ENCODE measurements at regions of chr2 and their contacts with region 1.

Region 1: GRCh38 chr2:56687169-56687568 is 503.4 kb downstream of the CCDC85A start:
- DNase-seq: no peak
- ATAC-seq: no peak
- H3K4me3 ChIP-seq: no peak overlapping the region
- H3K4me3 Mint-ChIP-seq: no peak overlapping the region
- H3K27ac ChIP-seq: no peak overlapping the region
- H3K27ac Mint-ChIP-seq: no peak overlapping the region
- H3K4me1 ChIP-seq: no peaks in the 10 kb centered on the region
- H3K4me1 Mint-ChIP-seq: no peaks in the 10 kb centered on the region
- H3K27me3 ChIP-seq: no peaks in the 10 kb centered on the region
- H3K27me3 Mint-ChIP-seq: no peaks in the 10 kb centered on the region
- CTCF ChIP-seq: no peak

Region 2: GRCh38 chr2:55839182-55839819 is 847.9 kb before region 1 on chr2:
- CTCF ChIA-PET with region 1: no interaction called
- POLR2A ChIA-PET with region 1: no interaction called
- intact Hi-C with region 1: loop called in 1 of 2 experiments (anchors 5 kb)
- DNase-seq: no peak
- ATAC-seq: no peak
- H3K4me3 ChIP-seq: no peak overlapping the region
- H3K4me3 Mint-ChIP-seq: no peak overlapping the region
- H3K27ac ChIP-seq: no peak overlapping the region
- H3K27ac Mint-ChIP-seq: no peak overlapping the region
- H3K4me1 ChIP-seq: no peaks in the 10 kb centered on the region
- H3K4me1 Mint-ChIP-seq: no peaks in the 10 kb centered on the region
- H3K27me3 ChIP-seq: no peaks in the 10 kb centered on the region
- H3K27me3 Mint-ChIP-seq: no peaks in the 10 kb centered on the region
- CTCF ChIP-seq: no peak